Prostate gland (tissue), 2 donors: ENCODE measurements at regions of chr9 and their contacts with region 1.

Region 1: GRCh38 chr9:132877824-132878694 is at the start of gene AK8:
- DNase-seq: peak; percentile 40
- H3K4me3 ChIP-seq: peak within 1 kb of the TSS; percentile 79 to 87
- H3K27ac ChIP-seq: peak within 1 kb of the TSS; percentile 78 to 80
- H3K4me1 ChIP-seq: no peaks in the 10 kb centered on the region
- H3K27me3 ChIP-seq: no peaks in the 10 kb centered on the region
- CTCF ChIP-seq: peak in 2 of 4 experiments; percentile 3 to 14
- POLR2A ChIP-seq: no peak
- total RNA-seq, gene AK8: 3.3 to 4.1 TPM

Region 2: GRCh38 chr9:132669698-132670456 is 208.2 kb before region 1 on chr9 and contains the start of gene DDX31:
- intact Hi-C with region 1: loop called (anchors 10 kb)
- DNase-seq: peak; percentile 77
- H3K4me3 ChIP-seq: peak within 1 kb of the TSS; percentile 96 to 99
- H3K27ac ChIP-seq: peak within 1 kb of the TSS; percentile 95 to 96
- H3K4me1 ChIP-seq: peaks cover 7% of the 10 kb centered on the region
- H3K27me3 ChIP-seq: no peaks in the 10 kb centered on the region
- CTCF ChIP-seq: peak in 1 of 4 experiments; percentile 32
- POLR2A ChIP-seq: no peak
- total RNA-seq, gene DDX31: 19.0 to 22.2 TPM

Region 3: GRCh38 chr9:133282464-133283238 is 404.6 kb after region 1 on chr9:
- intact Hi-C with region 1: no loop called
- DNase-seq: no peak
- H3K4me3 ChIP-seq: no peak overlapping the region
- H3K27ac ChIP-seq: no peak overlapping the region
- H3K4me1 ChIP-seq: no peaks in the 10 kb centered on the region
- H3K27me3 ChIP-seq: no peaks in the 10 kb centered on the region
- CTCF ChIP-seq: no peak
- POLR2A ChIP-seq: no peak